Right ventricle myocardium inferior (tissue), 1 donor: ENCODE measurements at regions of chr16 and their contacts with region 1.

Region 1: GRCh38 chr16:63530208-63530607 is 1494.0 kb upstream of the CDH8 start:
- DNase-seq: no peak
- ATAC-seq: no peak

Region 2: GRCh38 chr16:63453261-63453660 is 76.9 kb before region 1 on chr16:
- intact Hi-C with region 1: no loop called
- DNase-seq: no peak
- ATAC-seq: no peak

Region 3: DNA sequence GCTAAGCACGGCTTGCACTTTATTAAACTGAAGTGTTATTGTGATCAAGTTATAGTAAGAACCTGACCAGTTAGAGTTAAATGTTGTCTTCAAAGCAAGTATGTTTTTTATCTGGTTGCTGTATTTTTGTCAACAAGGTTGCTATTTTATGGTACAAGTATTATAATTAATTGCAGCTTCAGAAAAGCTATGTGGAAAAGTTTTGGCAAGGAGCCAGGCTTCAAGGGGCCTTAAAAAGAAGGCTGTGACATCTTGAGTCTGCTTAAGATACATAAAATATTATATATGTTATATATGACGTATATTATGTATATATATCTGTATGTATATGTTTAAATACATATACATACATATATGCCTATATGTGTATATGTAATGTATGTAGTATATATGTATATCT is 32.8 kb before region 1 on chr16:
- intact Hi-C with region 1: no loop called
- DNase-seq: no peak
- ATAC-seq: no peak

Region 4: DNA sequence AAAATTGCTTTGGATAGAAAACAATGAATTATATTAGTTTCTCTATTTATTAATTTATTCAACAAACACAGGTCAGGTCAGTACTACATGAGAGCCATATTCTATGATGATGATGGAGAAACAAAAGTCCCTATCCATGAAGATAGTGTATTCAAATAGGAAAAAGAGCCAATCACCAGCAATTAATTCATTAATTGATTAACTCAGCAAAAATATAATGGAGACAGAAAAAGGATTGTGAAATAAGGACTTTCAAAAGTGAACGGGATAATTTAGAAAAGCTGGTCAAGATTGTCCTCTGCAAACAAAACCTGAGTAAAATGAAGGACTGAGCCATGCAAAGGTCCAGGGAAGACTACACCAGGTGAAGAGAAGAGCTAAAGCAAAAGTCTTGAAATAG is 23.8 kb after region 1 on chr16:
- intact Hi-C with region 1: no loop called
- DNase-seq: no peak
- ATAC-seq: no peak

Region 5: GRCh38 chr16:63568164-63568563 is 38.0 kb after region 1 on chr16:
- intact Hi-C with region 1: loop called (anchors 5 kb)
- DNase-seq: no peak
- ATAC-seq: no peak

Region 6: GRCh38 chr16:63617047-63617989 is 87.1 kb after region 1 on chr16:
- intact Hi-C with region 1: loop called (anchors 10 kb)
- DNase-seq: peak; percentile 64
- ATAC-seq: peak; percentile 67

Region 7: GRCh38 chr16:63720848-63721247 is 190.6 kb after region 1 on chr16:
- intact Hi-C with region 1: no loop called
- DNase-seq: no peak
- ATAC-seq: no peak